OCI-LY7 (cell line): ENCODE measurements at regions of chr6 and their contacts with region 1.

Region 1: GRCh38 chr6:155439376-155439775 is 16.3 kb downstream of the NOX3 start:
- DNase-seq: peak; percentile 71
- H3K4me3 ChIP-seq: peak overlapping the region; percentile 42
- H3K27ac ChIP-seq: peak overlapping the region; percentile 76
- H3K4me1 ChIP-seq: peaks cover 40% of the 10 kb centered on the region
- CTCF ChIP-seq: no peak

Region 2: DNA sequence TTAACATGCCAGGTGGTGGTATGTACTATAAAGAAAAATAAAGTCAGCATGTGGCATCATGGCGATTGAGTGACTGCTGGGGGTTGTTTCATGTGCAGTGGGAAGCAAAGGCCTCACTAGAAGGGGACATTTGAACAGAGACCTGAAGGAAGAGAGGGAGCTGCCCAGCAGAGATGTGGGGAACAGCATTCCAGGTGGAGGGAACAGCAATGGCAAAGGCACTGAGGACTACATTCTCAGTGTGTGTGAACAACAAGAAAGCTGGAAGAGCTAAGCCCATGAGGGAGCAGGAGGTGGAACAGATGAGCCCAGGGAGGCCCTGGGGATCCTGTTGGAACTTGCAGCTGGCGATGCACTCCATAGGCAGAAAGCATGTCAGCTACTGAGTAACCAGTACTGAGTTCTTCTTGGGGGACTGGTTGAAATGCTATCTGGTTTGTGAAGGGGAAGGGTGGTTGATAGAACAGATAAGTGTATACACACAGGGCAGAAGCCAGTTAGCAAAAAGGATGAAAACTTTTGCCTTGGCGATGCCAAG is 12.9 kb before region 1 on chr6:
- CTCF ChIA-PET with region 1: interaction called, 3 read pairs
- POLR2A ChIA-PET with region 1: interaction called, 10 read pairs
- intact Hi-C with region 1: no loop called
- DNase-seq: no peak
- H3K4me3 ChIP-seq: no peak overlapping the region
- H3K27ac ChIP-seq: no peak overlapping the region
- H3K4me1 ChIP-seq: peaks cover under 1% of the 10 kb centered on the region
- CTCF ChIP-seq: no peak

Region 3: DNA sequence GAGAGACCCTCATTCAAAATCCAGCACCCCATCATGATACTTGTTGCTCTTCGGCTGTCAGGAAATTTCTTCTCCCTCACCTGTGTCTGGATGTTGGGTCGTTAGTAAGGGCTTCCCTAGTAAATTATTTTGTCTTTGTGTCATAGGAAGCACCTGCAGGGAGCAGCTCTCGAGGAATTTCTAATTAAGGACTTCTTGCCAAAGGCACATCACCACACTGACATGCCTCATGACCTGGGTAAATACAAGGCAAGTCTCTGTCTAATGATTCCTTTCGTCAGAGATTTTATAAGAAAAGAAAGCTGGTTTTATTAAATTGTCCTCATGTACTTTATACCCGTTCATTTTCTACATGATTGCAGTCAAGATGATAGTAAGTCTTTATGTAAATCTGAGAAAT is 16.4 kb after region 1 on chr6 and contains the start of gene NOX3:
- CTCF ChIA-PET with region 1: no interaction called
- POLR2A ChIA-PET with region 1: interaction called, 10 read pairs
- intact Hi-C with region 1: no loop called
- DNase-seq: no peak
- H3K4me3 ChIP-seq: no peak within 1 kb of the TSS
- H3K27ac ChIP-seq: no peak within 1 kb of the TSS
- H3K4me1 ChIP-seq: peaks cover 3% of the 10 kb centered on the region
- CTCF ChIP-seq: no peak
- total RNA-seq, gene NOX3: 0.22 TPM in 1 of 2 replicates, not detected in the other